Posterior vena cava (tissue), 2 donors: ENCODE measurements at regions of chr4 and their contacts with region 1.

Region 1: GRCh38 chr4:151957153-151957552 is 196.3 kb upstream of the GATB start:
- DNase-seq: no peak

Region 2: GRCh38 chr4:151850791-151851213 is 106.4 kb before region 1 on chr4:
- intact Hi-C with region 1: loop called in 1 of 2 experiments (anchors 2 kb)
- DNase-seq: no peak

Region 3: DNA sequence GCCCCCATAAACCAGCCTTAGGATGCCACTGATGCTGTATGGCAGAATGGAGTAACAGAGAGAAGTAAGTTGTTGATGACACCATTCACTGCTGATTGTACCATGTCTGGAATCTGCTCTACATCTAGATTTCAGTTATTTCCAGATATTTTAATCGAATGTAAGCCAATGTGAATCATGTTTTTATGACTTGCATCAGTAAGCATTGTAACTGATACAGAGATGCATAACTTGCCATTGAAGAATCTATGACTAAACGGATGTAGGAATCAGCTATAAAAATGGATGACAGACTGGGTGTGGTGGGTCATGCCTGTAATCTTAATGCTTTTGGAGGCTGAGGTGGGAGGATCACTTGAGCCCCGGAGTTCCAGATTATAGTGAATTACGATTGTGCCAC is 35.3 kb before region 1 on chr4:
- intact Hi-C with region 1: no loop called
- DNase-seq: no peak